ENCODE measurements at regions of chr6 and their contacts with region 1.

Region 1: GRCh38 chr6:35669451-35670045 is 19.2 kb downstream of the FKBP5 start:
- DNase-seq: peak; percentile 64
- ATAC-seq: peak; percentile 84
- H3K4me3 ChIP-seq: no peak overlapping the region
- H3K27ac ChIP-seq: peak overlapping the region; percentile 69; the same call in 1 of the 2 replicates
- H3K4me1 ChIP-seq: peaks cover 6% of the 10 kb centered on the region
- H3K27me3 ChIP-seq: no peaks in the 10 kb centered on the region
- CTCF ChIP-seq: no peak
- POLR2A ChIP-seq: no peak
- RAD21 ChIP-seq: no peak

Region 2: DNA sequence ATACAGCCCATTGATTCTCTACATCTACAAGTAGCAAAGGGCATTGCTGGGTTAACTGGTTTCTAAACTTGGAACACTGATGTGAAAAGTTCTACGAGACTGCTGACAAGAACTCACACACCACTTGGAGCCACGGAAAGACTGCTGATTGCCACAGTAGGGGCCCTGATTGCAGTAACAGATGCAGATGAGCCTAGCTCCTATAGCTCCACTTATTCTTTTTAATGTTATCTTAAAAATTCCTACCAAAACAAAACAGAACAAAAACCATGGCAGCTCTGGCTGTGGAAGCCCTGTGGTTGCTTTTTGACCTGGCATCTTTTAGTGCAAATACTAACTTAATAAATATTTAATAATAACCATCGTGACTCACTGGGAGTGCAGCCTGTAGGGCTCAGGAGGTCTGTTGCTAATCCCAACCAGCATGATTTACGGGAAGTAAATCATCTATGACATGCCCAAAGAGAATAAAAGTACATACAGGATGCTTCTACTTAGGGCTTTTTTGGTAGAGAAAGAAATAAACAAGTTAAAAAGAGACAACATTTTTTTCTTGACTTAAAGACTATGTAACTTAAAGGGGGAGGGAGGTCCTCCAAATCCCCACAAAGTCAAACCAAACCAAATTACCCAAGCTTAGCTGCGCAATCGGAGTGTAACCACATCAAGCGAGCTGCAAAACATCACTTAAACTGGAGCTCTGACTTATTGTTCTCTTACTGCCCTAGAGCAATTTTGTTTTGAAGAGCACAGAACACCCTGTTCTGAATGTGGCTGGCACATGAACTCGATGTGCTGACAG is 68.0 kb before region 1 on chr6:
- CTCF ChIA-PET with region 1: no interaction called
- POLR2A ChIA-PET with region 1: no interaction called
- dilution Hi-C with region 1: no loop called
- in situ Hi-C with region 1: no loop called
- intact Hi-C with region 1: loop called (anchors 5 kb)
- DNase-seq: peak; percentile 93
- ATAC-seq: peak; percentile 79
- H3K4me3 ChIP-seq: peak overlapping the region; percentile 5; the same call in 1 of the 2 replicates
- H3K27ac ChIP-seq: peak overlapping the region; percentile 53; the same call in 1 of the 2 replicates
- H3K4me1 ChIP-seq: peaks cover 12% of the 10 kb centered on the region
- H3K27me3 ChIP-seq: no peaks in the 10 kb centered on the region
- CTCF ChIP-seq: no peak
- POLR2A ChIP-seq: no peak
- RAD21 ChIP-seq: no peak

Region 3: DNA sequence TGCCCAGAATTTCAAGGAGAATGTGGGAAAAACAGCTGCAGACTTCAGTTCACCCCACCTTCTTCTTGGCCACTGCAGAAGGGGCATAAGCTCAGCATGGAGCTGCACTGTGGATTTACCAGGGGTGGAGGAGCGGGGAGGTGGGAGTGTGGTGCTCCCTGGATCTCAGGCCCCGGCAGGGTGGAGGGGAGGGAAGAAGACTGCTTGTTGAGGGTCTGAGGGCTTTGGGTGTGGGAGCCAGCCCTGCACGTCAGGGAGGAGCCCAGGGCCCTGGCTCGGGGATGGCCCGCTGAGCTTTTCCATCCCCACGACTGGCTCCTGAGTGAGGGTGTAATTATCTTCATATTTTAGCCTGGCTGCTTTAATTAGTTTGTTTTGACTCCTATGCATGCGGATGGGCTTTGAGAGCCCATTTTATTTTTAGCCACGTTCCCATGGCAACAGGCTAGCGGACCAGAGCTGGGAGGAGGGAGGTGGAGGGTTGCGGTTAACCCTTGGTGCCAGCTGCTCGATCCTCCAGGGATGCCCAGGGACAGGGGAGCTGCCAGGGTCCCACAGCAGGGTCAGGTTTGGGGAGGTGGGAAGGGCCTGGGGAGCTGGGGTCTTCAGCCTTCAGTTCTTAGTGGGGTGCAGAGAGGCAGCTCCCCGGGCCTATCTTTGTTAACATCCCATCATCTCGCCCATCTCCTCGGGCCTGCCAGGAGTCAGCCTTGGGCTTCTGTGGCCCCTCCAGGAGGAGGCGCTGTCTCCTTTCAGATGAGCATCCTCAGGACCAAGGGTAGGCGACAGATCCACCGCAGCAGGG is 1096.2 kb after region 1 on chr6:
- CTCF ChIA-PET with region 1: no interaction called
- POLR2A ChIA-PET with region 1: no interaction called
- dilution Hi-C with region 1: no loop called
- in situ Hi-C with region 1: no loop called
- intact Hi-C with region 1: no loop called
- DNase-seq: peak; percentile 76
- ATAC-seq: peak; percentile 95
- H3K4me3 ChIP-seq: no peak overlapping the region
- H3K27ac ChIP-seq: no peak overlapping the region
- H3K4me1 ChIP-seq: peaks cover 11% of the 10 kb centered on the region
- H3K27me3 ChIP-seq: peaks cover 13% of the 10 kb centered on the region
- CTCF ChIP-seq: peak; percentile 98
- POLR2A ChIP-seq: 0 out of 2 replicates have a peak, but pooled peaks have one; percentile 32
- RAD21 ChIP-seq: peak; percentile 98